Activated CD8-positive, alpha-beta T cell treated with anti-CD3 and anti-CD28 coated beads for 36 hours (primary cell): ENCODE measurements at regions of chr6 and their contacts with region 1.

Region 1: DNA sequence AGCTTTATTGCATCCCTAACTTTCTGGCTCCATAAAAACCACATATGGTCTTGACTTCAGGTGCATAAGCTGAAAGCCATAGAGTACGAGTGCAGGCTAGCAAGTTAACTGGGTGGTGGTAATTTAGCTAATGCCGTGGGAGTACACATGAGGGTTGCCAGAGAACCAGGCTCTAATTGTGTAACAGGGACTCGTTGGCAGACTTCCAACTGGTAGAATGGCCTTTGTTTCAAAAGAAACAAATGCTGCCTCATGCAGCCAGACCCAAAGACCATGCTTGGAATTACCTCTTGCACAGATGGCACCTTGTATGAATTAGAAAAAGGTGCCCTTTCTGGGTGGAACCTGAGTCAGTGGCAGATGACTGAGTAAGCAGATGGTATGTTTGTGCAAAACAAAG is 73.2 kb downstream of the LY86 start:
- DNase-seq: no peak
- ATAC-seq: no peak
- H3K4me3 Mint-ChIP-seq: no peak overlapping the region
- H3K27ac Mint-ChIP-seq: no peak overlapping the region
- H3K4me1 Mint-ChIP-seq: peaks cover 33% of the 10 kb centered on the region
- H3K27me3 Mint-ChIP-seq: peaks cover 1% of the 10 kb centered on the region
- CTCF ChIP-seq: no peak

Region 2: GRCh38 chr6:6556738-6557505 is 104.8 kb before region 1 on chr6:
- CTCF ChIA-PET with region 1: interaction called, 5 read pairs
- POLR2A ChIA-PET with region 1: no interaction called
- intact Hi-C with region 1: loop called (anchors 5 kb)
- DNase-seq: peak; percentile 56
- ATAC-seq: peak; percentile 57
- H3K4me3 Mint-ChIP-seq: no peak overlapping the region
- H3K27ac Mint-ChIP-seq: no peak overlapping the region
- H3K4me1 Mint-ChIP-seq: peaks cover 36% of the 10 kb centered on the region
- H3K27me3 Mint-ChIP-seq: peaks cover 3% of the 10 kb centered on the region
- CTCF ChIP-seq: peak; percentile 87

Region 3: GRCh38 chr6:6610031-6610591 is 51.6 kb before region 1 on chr6:
- CTCF ChIA-PET with region 1: interaction called, 12 read pairs
- POLR2A ChIA-PET with region 1: interaction called, 3 read pairs
- intact Hi-C with region 1: no loop called
- DNase-seq: peak; percentile 69
- ATAC-seq: peak; percentile 66
- H3K4me3 Mint-ChIP-seq: no peak overlapping the region
- H3K27ac Mint-ChIP-seq: peak overlapping the region; percentile 86
- H3K4me1 Mint-ChIP-seq: peaks cover 56% of the 10 kb centered on the region
- H3K27me3 Mint-ChIP-seq: no peaks in the 10 kb centered on the region
- CTCF ChIP-seq: no peak